Prostate gland (tissue), 2 donors: ENCODE measurements at regions of chr1 and their contacts with region 1.

Region 1: DNA sequence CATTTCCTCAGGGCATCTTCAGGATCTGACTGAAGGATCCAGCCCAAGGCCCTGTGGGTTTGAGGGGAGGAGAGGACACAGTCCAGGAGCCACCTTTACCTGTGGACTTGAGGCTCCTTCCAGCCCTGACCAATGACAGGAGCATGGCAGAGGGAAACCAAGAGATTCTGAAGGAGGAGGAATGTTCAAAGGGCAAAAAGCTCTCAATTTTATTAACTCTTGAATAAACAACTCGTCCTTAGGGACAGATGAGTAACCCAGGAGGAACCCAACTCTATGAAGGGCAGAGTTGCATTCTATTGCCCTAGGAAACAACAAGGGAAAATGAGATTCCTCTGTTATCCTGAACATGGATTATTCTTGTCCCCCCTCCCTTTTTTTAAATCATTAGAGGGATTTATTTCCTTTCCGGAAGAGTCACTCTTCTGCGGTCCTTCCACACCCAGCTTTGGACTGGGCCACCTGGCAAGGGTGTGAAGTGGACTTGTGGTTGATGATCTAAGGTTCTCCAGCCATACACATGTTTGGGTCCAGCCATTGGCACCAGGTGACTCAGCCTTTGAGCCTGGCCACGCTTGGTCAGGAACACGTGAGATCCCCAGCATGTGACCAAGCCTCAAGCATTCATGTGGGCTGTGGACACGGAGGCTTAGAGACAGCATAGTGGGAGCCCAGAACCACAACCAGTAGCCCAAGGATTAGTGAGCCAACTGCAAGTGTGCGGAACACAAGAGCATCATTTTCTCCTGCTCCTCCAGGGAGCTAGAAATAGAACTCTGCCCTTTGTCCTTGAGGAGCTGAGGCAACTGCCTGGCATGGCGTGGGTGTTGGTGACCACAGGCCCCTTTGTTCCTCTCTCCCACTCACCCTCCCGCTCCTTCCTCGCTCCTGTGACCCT is 49.9 kb downstream of the NENF start:
- DNase-seq: no peak
- H3K4me3 ChIP-seq: no peak overlapping the region
- H3K27ac ChIP-seq: no peak overlapping the region
- H3K4me1 ChIP-seq: no peaks in the 10 kb centered on the region
- H3K27me3 ChIP-seq: no peaks in the 10 kb centered on the region
- CTCF ChIP-seq: no peak
- POLR2A ChIP-seq: no peak

Region 2: DNA sequence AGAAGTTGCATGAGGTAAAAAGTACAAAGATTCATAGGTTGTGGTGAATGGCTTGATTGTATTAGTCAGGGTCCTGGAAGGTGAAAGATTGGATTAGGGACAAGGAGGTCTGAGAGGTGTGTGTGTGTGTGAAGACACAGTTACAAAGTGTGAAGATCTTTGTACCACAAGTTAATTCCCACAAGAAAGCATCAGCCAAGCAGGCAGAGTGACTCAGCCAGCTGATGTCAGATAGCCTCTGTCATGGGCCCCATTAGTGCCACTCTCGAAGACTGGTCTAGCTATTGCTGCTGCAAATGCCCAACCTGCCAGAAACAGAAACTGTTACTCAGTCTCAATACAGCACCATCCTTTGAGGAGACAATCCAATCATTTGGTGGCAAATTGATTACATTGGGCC is 350.6 kb before region 1 on chr1:
- intact Hi-C with region 1: no loop called
- DNase-seq: no peak
- H3K4me3 ChIP-seq: no peak overlapping the region
- H3K27ac ChIP-seq: no peak overlapping the region
- H3K4me1 ChIP-seq: no peaks in the 10 kb centered on the region
- H3K27me3 ChIP-seq: no peaks in the 10 kb centered on the region
- CTCF ChIP-seq: no peak
- POLR2A ChIP-seq: no peak

Region 3: DNA sequence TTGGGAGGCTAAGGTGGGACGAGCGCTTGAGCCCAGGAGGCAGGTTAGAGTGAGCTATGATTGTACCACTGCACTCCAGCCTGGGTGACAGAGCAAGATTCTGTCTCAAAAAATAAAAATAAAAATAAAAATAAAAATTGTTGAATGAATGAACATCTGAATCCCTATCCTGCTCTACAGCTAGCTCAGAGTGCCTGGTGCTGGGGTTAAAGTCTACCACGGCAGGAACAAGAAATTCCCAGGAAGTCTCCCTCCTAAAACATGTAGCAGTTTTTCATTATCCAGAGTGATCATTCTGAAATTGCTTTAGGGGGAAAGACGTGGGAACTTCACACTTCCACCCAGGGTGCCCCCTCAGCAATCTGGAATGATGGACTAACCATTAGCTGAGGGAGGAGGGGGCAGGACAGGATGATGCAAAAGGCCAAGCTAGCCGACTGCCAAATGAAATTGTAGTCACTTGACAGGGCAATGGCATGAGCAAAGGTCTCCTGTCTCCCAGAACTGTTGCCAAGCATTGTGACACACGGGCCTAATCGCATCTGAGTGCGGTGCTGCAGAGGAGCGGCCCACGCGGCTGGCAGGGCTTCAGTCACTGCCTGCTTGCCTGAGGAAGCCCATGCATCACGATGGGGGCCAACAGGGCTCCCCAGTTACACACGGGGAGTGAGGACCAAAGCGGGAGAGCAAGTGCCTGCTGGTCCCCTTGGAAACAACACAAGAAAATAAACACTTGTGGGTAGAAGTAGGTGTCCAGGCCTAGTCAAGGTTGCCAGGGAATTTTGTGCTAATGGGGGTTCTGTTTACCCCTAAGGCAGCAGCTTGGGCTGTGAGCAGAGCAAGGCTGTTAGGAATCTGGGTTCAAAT is 35.8 kb after region 1 on chr1:
- intact Hi-C with region 1: loop called (anchors 5 kb)
- DNase-seq: no peak
- H3K4me3 ChIP-seq: no peak overlapping the region
- H3K27ac ChIP-seq: no peak overlapping the region
- H3K4me1 ChIP-seq: no peaks in the 10 kb centered on the region
- H3K27me3 ChIP-seq: no peaks in the 10 kb centered on the region
- CTCF ChIP-seq: no peak
- POLR2A ChIP-seq: no peak

Region 4: DNA sequence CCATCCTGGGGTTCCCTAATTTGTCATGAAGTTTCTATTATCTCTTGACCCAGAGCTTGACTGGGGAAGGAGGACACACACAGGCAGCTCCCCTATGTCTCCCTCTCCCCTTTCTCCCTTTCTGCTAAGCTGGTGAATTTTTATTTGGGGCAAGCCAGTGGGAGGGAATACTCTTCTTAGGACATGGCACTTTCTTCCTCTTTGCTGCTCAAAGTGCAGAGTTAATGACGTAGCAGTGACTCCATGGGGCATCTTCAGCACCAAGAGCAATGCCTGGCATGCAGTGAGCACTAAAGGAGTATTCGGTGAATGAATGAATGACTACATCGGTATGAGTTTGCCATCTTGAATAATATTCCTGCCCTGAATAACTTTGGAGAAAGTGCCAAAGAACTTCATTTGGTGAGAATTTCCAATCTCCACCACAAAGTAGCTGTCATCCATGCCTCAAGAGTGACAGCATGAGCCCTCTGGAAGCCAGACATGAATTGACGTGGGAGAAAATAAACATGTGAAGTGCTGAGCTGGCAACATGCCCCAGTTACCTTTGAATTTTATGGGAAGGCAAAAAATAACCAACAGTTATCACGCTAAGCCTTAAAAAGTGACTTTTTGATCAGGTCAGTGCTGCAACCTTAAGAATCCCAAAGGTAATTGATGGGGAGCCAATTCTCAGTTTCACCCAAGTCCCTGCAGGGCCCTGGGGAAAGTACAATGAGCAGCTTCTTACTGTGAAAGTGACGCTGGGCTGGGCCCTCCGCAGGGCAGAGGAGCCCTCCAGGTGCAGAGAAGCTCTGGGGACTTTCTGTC is 103.8 kb after region 1 on chr1:
- intact Hi-C with region 1: no loop called
- DNase-seq: no peak
- H3K4me3 ChIP-seq: no peak overlapping the region
- H3K27ac ChIP-seq: no peak overlapping the region
- H3K4me1 ChIP-seq: no peaks in the 10 kb centered on the region
- H3K27me3 ChIP-seq: peaks cover 2% of the 10 kb centered on the region
- CTCF ChIP-seq: no peak
- POLR2A ChIP-seq: no peak

Region 5: GRCh38 chr1:213041443-213041842 is 558.8 kb after region 1 on chr1:
- intact Hi-C with region 1: no loop called
- DNase-seq: no peak
- H3K4me3 ChIP-seq: no peak overlapping the region
- H3K27ac ChIP-seq: no peak overlapping the region
- H3K4me1 ChIP-seq: no peaks in the 10 kb centered on the region
- H3K27me3 ChIP-seq: no peaks in the 10 kb centered on the region
- CTCF ChIP-seq: no peak
- POLR2A ChIP-seq: no peak